ENCODE measurements at regions of chr3 and their contacts with region 1.

Region 1: GRCh38 chr3:108477511-108478147 is 32.8 kb downstream of the MYH15 start:
- DNase-seq: peak; percentile 10 to 72 (median 49)
- ATAC-seq: peak; percentile 90
- H3K4me3 ChIP-seq: no peak overlapping the region
- H3K4me3 Mint-ChIP-seq: no peak overlapping the region
- H3K27ac ChIP-seq: no peak overlapping the region
- H3K27ac Mint-ChIP-seq: no peak overlapping the region
- H3K4me1 ChIP-seq: no peaks in the 10 kb centered on the region
- H3K4me1 Mint-ChIP-seq: peaks cover 3% of the 10 kb centered on the region
- H3K27me3 ChIP-seq: no peaks in the 10 kb centered on the region
- H3K27me3 Mint-ChIP-seq: peaks cover 3% of the 10 kb centered on the region
- CTCF ChIP-seq: peak; percentile 82

Region 2: GRCh38 chr3:107676469-107677309 is 800.9 kb before region 1 on chr3:
- CTCF ChIA-PET with region 1: interaction called, 4 read pairs
- POLR2A ChIA-PET with region 1: no interaction called
- intact Hi-C with region 1: loop called in 1 of 2 experiments (anchors 5 kb)
- DNase-seq: peak in 2 of 9 experiments; percentile 24 to 49
- ATAC-seq: peak; percentile 54
- H3K4me3 ChIP-seq: no peak overlapping the region
- H3K4me3 Mint-ChIP-seq: no peak overlapping the region
- H3K27ac ChIP-seq: no peak overlapping the region
- H3K27ac Mint-ChIP-seq: peak overlapping the region; percentile 58
- H3K4me1 ChIP-seq: no peaks in the 10 kb centered on the region
- H3K4me1 Mint-ChIP-seq: peaks cover 41% of the 10 kb centered on the region
- H3K27me3 ChIP-seq: no peaks in the 10 kb centered on the region
- H3K27me3 Mint-ChIP-seq: no peaks in the 10 kb centered on the region
- CTCF ChIP-seq: peak; percentile 74

Region 3: DNA sequence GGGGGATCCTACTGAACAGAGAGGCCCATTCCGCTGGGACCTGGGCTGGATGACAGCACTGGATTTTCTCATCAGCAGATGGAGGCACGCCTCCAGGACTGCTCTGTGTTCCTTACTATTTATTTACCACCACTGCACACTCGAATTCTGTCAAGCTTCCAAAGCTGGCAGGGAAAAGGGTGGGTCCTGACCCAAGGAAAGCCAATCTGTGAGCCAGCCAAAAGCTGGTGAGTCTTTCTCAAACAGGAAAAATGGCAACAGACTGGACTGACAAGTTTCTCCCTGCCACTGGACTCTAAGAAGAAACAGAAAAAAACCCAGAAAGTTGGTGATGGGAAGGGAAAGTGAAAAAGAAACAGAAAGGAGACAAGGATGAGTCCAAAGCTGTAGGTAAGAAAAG is 424.6 kb before region 1 on chr3:
- CTCF ChIA-PET with region 1: no interaction called
- POLR2A ChIA-PET with region 1: no interaction called
- intact Hi-C with region 1: loop called (anchors 5 to 10 kb)
- DNase-seq: no peak
- ATAC-seq: no peak
- H3K4me3 ChIP-seq: no peak overlapping the region
- H3K4me3 Mint-ChIP-seq: no peak overlapping the region
- H3K27ac ChIP-seq: peak overlapping the region in 1 of 2 experiments; percentile 15
- H3K27ac Mint-ChIP-seq: peak overlapping the region; percentile 87
- H3K4me1 ChIP-seq: peaks cover 10% of the 10 kb centered on the region
- H3K4me1 Mint-ChIP-seq: peaks cover 54% of the 10 kb centered on the region
- H3K27me3 ChIP-seq: no peaks in the 10 kb centered on the region
- H3K27me3 Mint-ChIP-seq: no peaks in the 10 kb centered on the region
- CTCF ChIP-seq: no peak

Region 4: DNA sequence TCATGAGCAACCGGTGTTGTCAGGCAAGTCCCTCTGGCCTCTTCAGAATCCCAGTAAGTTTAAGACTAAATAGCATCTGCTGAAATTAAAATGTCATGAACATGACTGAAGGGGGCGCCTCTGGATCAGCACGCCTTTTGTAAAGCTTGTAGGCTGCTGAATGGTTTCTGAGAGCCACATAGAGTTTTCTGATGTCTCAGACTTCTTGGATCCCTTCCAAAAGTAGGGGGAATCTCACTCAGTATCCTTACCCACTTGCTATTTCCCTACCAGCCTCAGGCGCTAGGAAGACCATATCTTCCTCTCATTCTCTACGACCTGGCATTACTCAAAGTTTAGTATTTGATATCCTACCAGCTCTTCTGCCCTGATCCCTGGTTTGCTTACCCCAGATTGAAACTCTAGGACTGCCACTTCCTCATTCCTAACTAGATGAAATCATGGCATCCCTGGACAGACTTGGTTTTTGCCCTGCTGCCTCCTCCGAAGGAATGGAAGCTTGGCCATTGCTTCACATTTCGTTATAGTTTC is 324.1 kb before region 1 on chr3:
- CTCF ChIA-PET with region 1: interaction called, 30 read pairs
- POLR2A ChIA-PET with region 1: no interaction called
- intact Hi-C with region 1: loop called (anchors 1 kb)
- DNase-seq: peak in 8 of 9 experiments; percentile 2 to 69 (median 39)
- ATAC-seq: peak; percentile 46
- H3K4me3 ChIP-seq: no peak overlapping the region
- H3K4me3 Mint-ChIP-seq: no peak overlapping the region
- H3K27ac ChIP-seq: no peak overlapping the region
- H3K27ac Mint-ChIP-seq: no peak overlapping the region
- H3K4me1 ChIP-seq: no peaks in the 10 kb centered on the region
- H3K4me1 Mint-ChIP-seq: peaks cover 3% of the 10 kb centered on the region
- H3K27me3 ChIP-seq: no peaks in the 10 kb centered on the region
- H3K27me3 Mint-ChIP-seq: no peaks in the 10 kb centered on the region
- CTCF ChIP-seq: peak; percentile 54

Region 5: GRCh38 chr3:108461661-108462111 is 15.9 kb before region 1 on chr3:
- CTCF ChIA-PET with region 1: interaction called, 12 read pairs
- POLR2A ChIA-PET with region 1: interaction called, 3 read pairs
- intact Hi-C with region 1: no loop called
- DNase-seq: no peak
- ATAC-seq: no peak
- H3K4me3 ChIP-seq: no peak overlapping the region
- H3K4me3 Mint-ChIP-seq: no peak overlapping the region
- H3K27ac ChIP-seq: no peak overlapping the region
- H3K27ac Mint-ChIP-seq: no peak overlapping the region
- H3K4me1 ChIP-seq: no peaks in the 10 kb centered on the region
- H3K4me1 Mint-ChIP-seq: no peaks in the 10 kb centered on the region
- H3K27me3 ChIP-seq: no peaks in the 10 kb centered on the region
- H3K27me3 Mint-ChIP-seq: peaks cover 2% of the 10 kb centered on the region
- CTCF ChIP-seq: no peak

Region 6: GRCh38 chr3:108780235-108780634 is 302.6 kb after region 1 on chr3:
- CTCF ChIA-PET with region 1: no interaction called
- POLR2A ChIA-PET with region 1: no interaction called
- intact Hi-C with region 1: no loop called
- DNase-seq: peak; percentile 4 to 69 (median 27)
- ATAC-seq: peak; percentile 91
- H3K4me3 ChIP-seq: no peak overlapping the region
- H3K4me3 Mint-ChIP-seq: no peak overlapping the region
- H3K27ac ChIP-seq: no peak overlapping the region
- H3K27ac Mint-ChIP-seq: peak overlapping the region; percentile 70
- H3K4me1 ChIP-seq: peaks cover 19% of the 10 kb centered on the region
- H3K4me1 Mint-ChIP-seq: peaks cover 40% of the 10 kb centered on the region
- H3K27me3 ChIP-seq: no peaks in the 10 kb centered on the region
- H3K27me3 Mint-ChIP-seq: no peaks in the 10 kb centered on the region
- CTCF ChIP-seq: no peak